ENCODE measurements at regions of chr21 and their contacts with region 1.

Region 1: DNA sequence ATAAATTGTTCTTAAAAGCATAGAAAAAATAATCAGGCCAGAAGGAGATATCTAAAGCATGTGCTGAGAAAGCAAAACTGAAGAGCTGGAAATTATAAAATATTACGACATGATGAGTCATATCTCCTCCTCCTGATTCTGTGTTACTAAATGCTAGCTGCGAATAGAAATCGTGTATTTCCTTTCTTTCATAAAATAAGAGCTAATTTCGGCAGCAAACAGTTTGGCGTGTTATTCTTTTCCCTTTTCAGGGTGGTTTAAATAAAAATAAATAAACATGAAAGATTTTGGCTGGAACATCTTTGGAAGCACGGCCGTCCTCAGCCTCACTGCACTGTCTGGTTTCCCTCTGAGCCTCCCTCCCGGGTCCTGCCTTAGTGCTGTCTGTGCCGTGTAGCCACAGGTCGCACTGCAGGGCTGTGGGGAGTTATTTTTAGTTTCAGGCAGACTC is 56.0 kb downstream of the ADARB1 start:
- DNase-seq: no peak
- ATAC-seq: peak; percentile 39
- H3K4me3 ChIP-seq: no peak overlapping the region
- H3K4me1 ChIP-seq: peaks cover 11% of the 10 kb centered on the region
- CTCF ChIP-seq: no peak

Region 2: DNA sequence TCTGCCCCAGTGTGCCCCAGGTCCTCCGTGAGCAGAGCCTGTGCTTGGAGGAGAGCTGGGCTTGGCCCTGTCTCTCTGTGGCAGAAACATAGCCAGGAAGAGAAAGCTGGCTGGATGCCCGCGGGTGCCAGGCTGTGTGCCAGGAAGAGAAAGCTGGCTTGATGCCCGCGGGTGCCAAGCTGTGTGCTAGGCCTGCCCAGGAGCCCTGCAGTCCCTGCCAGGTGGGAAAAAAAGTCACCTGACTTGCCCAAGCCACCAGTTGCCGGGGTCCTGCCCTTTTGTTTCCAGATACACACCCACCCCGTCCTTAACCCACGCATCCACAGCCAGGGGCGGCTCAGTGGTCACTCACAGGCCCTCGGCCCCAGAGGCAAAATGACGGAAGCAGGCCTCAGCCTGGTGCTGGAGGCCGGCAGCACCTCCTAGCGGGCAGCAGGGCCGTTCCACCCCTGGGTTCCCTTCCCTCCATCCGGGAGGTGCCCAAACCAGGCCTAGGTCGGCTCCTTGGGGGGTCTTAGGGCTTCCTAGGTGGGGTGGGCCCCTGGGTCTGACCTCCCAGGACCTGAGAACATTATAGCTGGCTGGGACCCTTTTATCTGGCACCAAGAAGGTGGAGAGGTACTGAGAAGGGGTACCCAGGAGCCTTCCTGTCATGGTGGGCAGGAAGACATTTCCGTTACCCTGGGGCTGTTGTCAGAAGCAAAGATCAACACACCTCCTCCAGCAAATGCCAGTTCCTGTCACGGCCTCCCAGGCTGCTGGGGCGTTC is 218.8 kb before region 1 on chr21:
- intact Hi-C with region 1: no loop called
- DNase-seq: peak; percentile 89 to 96 (median 94)
- ATAC-seq: peak; percentile 87
- H3K4me3 ChIP-seq: no peak overlapping the region
- H3K4me1 ChIP-seq: peaks cover 10% of the 10 kb centered on the region
- CTCF ChIP-seq: peak; percentile 57

Region 3: DNA sequence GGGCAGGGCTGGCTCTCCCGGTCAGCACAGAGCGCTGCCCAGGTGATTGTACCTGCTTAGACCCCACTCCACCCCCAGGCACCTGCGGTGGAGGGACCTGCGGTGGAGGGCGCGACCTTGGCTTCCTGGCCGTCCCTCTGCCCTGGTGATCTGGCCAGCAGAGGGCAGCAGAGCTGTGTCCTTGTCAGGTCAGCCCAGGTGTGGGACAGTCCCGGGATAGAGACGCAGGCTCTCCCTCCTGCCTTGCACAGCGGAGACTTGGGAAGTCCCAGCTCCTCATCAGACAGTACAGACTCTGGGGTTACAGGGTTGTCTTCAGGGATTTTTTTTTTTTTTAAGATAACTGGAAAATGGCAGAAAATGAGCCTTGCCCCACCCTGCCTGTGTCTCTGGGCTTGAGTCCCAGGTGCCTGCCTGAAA is 180.6 kb before region 1 on chr21:
- intact Hi-C with region 1: loop called in 1 of 2 experiments (anchors 5 kb)
- DNase-seq: peak; percentile 87 to 95 (median 91)
- ATAC-seq: peak; percentile 91
- H3K4me3 ChIP-seq: no peak overlapping the region
- H3K4me1 ChIP-seq: peaks cover 4% of the 10 kb centered on the region
- CTCF ChIP-seq: peak; percentile 90

Region 4: DNA sequence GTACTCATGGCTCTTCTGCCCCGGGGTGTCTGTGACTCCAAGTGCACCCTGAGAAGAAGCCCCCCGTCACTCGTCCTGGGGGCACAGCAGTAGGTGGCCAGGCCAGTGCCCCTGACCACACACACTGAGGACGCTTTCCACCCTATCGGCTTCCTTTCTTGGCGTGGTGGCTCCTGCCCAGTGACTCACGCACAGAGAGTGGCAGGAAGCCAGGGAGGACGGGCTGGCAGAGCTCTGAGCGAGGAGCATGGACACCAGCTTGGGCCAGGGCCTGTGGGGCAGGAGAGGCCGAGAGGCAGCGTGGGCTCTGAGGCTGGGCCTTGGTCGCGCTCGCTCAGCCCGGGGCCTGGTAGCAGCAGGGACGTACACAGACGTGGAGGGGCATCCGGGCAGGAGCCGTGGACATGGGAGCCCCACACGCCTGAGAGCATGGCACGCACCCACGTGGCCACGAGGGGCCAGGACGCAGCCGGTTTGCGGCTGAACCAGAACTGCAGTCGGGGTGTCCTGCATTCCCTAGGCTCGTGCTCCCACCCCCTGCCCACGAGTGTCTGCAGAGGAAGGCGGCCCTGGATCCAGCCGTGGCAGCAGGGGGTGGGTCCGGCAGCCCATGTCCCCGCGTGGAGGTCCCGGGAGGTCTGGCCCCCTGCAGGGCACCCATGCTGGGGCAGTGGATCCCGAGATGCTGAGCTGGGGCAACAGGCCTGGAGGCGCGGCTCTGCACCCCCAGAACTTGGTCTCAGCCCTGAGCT is 129.2 kb before region 1 on chr21:
- intact Hi-C with region 1: no loop called
- DNase-seq: peak in 2 of 3 donors; percentile 46 to 47
- ATAC-seq: no peak
- H3K4me3 ChIP-seq: no peak overlapping the region
- H3K4me1 ChIP-seq: no peaks in the 10 kb centered on the region
- CTCF ChIP-seq: no peak

Region 5: GRCh38 chr21:45386721-45387371 is 256.5 kb after region 1 on chr21:
- intact Hi-C with region 1: no loop called
- DNase-seq: peak in 2 of 3 donors; percentile 23 to 54
- ATAC-seq: peak; percentile 26
- H3K4me3 ChIP-seq: no peak overlapping the region
- H3K4me1 ChIP-seq: no peaks in the 10 kb centered on the region
- CTCF ChIP-seq: no peak

Measured in mucosa of descending colon (tissue), 3 donors.